Mammary epithelial cell (primary cell): ENCODE measurements at regions of chr16 and their contacts with region 1.

Region 1: DNA sequence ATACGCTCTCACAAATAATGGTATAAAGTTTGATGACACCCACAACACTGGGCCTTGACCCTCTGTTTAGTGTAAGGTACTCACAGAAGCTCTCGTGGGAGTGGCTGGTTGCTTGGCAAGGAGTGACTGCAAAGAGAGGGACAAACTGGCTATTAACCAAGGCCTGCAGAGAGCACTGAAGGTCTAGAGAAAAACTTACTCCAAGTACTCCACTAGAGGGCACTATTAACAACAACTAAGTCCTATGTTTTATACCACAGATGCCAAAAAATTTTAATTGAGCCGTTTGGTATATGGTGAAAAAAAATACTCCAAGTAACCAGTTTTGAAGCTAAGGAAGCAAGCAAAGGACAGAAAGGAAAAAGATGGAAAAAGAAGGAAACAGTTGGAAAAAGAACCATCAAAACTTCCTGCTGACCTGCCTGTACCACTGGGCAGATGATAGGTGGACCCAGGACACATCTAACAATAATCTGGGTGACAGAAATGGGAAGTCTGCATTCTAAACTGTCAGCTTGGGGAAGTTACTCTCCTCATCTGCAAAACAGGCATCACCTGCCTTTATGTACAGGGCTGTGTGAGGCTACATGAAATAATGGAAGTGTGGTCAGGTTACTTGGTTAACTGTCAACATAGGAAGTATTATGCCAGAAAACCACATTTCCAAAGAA is 23.2 kb downstream of the DYNC1LI2 start:
- DNase-seq: peak; percentile 26
- H3K4me3 ChIP-seq: no peak overlapping the region
- H3K27ac ChIP-seq: no peak overlapping the region
- H3K4me1 ChIP-seq: no peaks in the 10 kb centered on the region
- H3K27me3 ChIP-seq: no peaks in the 10 kb centered on the region
- CTCF ChIP-seq: peak; percentile 47 to 58

Region 2: GRCh38 chr16:66650707-66651473 is 77.4 kb before region 1 on chr16:
- CTCF ChIA-PET with region 1: no interaction called
- dilution Hi-C with region 1: no loop called
- in situ Hi-C with region 1: no loop called
- intact Hi-C with region 1: no loop called
- DNase-seq: peak; percentile 86
- H3K4me3 ChIP-seq: peak overlapping the region in 1 of 3 experiments; percentile 18
- H3K27ac ChIP-seq: peak overlapping the region; percentile 59
- H3K4me1 ChIP-seq: peaks cover 24% of the 10 kb centered on the region
- H3K27me3 ChIP-seq: no peaks in the 10 kb centered on the region
- CTCF ChIP-seq: peak; percentile 93 to 99

Region 3: DNA sequence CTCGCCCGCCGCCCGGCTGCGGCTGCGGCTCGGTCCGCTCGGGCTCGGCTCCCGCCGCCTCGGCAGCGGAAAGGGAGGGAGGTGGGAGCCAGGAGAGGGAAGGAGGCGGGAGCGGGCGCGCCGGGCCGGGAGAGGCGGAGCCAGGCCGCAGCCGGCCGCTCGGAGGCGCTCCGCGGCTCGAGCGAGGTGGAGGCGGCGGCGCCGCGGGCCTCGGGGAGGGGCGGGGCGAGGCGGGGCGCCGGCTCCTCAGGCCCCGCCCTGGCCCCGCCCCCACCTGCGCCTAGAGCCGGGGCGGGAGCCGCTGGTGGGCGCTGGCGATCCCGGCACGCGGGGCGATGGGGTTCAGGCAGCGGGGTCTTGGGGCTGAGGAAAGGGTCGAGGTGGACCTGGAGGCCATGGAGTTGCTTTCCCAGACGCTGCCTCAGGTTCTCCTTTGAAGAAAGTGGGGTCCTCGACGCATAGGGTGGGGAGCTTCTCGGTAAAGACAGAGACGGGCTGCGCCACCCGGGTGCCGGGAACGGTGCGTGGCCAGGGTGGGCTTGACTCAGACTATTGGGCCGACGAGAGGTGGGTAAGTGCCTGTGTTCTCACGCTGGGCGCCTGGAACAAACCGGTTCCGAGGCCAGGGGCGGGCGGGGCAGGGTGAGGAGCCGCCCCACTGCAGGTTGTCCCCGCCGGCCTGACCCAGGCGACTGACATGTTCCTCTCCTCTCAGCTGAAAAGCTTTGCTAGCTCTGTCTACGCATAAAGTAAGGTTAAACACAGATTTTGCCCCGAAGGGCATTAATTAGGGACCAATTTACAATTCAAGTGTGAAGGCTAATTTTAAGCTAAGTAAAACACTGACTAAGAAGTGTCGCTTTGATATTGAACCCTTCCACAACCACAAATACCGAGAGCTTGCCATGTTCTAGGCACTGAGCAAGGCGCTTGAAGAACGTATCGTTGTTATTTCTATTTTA is 31.3 kb before region 1 on chr16 and contains the start of gene CMTM4:
- CTCF ChIA-PET with region 1: no interaction called
- dilution Hi-C with region 1: no loop called
- in situ Hi-C with region 1: no loop called
- intact Hi-C with region 1: loop called (anchors 1 kb)
- DNase-seq: peak; percentile 88
- H3K4me3 ChIP-seq: peak within 1 kb of the TSS; percentile 79 to 98 (median 86)
- H3K27ac ChIP-seq: peak within 1 kb of the TSS; percentile 65
- H3K4me1 ChIP-seq: peaks cover 24% of the 10 kb centered on the region
- H3K27me3 ChIP-seq: no peaks in the 10 kb centered on the region
- CTCF ChIP-seq: peak; percentile 7 to 28
- total RNA-seq, gene CMTM4: 24.0 to 81.7 TPM

Region 4: GRCh38 chr16:66751303-66751991 is 23.2 kb after region 1 on chr16 and contains the start of gene DYNC1LI2:
- CTCF ChIA-PET with region 1: no interaction called
- dilution Hi-C with region 1: no loop called
- in situ Hi-C with region 1: no loop called
- intact Hi-C with region 1: loop called (anchors 1 kb)
- DNase-seq: peak; percentile 58
- H3K4me3 ChIP-seq: peak within 1 kb of the TSS; percentile 68 to 97 (median 81)
- H3K27ac ChIP-seq: peak within 1 kb of the TSS; percentile 80
- H3K4me1 ChIP-seq: peaks cover 10% of the 10 kb centered on the region
- H3K27me3 ChIP-seq: no peaks in the 10 kb centered on the region
- CTCF ChIP-seq: peak; percentile 57 to 62
- total RNA-seq, gene DYNC1LI2: 90.8 to 127 TPM

Region 5: DNA sequence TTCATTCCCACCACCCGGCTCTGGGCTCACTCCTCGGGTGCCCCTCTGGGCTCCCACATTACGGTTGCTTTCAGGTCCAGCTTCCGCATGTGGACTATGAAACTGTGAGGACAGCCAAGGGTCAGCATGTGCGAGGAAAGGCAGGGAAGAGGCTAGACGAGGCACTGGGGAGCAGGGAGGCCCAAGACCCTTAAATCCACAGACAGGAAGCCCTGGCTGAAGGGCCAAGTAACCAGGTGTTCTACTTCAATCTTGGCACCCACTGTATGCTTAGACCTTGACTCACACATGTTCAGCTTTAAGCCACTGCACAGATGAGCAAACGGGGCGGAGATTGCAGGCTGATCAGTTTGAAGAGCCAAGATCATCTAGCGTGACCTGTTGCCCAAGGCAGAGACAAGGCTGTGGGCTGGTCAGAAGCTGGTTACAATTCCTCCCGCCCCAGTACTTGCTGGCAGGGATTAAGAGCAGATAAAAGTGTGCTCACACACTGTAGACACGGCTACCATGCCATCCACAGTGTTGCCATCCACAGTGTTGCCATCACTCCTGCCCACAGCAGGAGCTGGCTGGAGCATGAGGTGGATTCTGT is 260.0 kb after region 1 on chr16 and contains the start of gene CES4A:
- CTCF ChIA-PET with region 1: no interaction called
- dilution Hi-C with region 1: no loop called
- in situ Hi-C with region 1: no loop called
- intact Hi-C with region 1: no loop called
- DNase-seq: peak; percentile 78
- H3K4me3 ChIP-seq: no peak within 1 kb of the TSS
- H3K27ac ChIP-seq: no peak within 1 kb of the TSS
- H3K4me1 ChIP-seq: peaks cover 8% of the 10 kb centered on the region
- H3K27me3 ChIP-seq: no peaks in the 10 kb centered on the region
- CTCF ChIP-seq: no peak
- total RNA-seq, gene CES4A: 2.7 to 3.6 TPM